Panc1 (cell line): ENCODE measurements at regions of chr1 and their contacts with region 1.

Region 1: DNA sequence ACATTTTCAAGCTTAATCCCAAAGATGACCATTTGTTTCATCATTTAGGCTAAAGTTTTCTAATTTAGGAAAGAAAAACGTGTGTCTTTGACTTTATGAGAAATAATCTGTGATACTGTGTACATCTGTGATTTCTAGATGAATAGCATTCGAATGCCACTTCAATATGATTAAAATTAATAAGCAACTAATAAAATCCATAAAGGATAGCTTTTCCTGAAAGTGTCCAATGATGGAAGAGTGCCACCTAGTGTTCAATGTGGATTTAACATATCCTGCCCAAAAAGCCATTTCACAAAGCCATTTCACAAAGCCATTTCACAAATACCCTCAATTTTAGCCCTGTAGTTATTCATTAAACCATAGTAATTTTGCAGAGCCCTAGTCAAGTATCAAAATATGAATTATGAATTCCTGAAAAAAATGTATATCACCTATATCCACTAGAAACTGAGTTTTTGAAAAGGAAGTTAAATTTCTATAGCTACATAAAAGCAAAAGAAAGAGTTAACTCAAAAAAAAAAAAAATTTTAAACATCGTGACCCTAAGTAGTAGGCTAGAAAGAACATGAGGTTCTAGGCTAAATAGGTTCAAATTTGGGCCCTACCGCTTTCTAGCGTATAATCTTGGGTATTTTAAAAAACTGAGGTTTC is 19.1 kb downstream of the NME7 start:
- DNase-seq: no peak
- ATAC-seq: no peak
- H3K4me3 ChIP-seq: no peak overlapping the region
- H3K27ac ChIP-seq: no peak overlapping the region
- H3K4me1 ChIP-seq: no peaks in the 10 kb centered on the region
- H3K27me3 ChIP-seq: no peaks in the 10 kb centered on the region
- CTCF ChIP-seq: peak; percentile 76; the same call in 1 of the 2 replicates

Region 2: DNA sequence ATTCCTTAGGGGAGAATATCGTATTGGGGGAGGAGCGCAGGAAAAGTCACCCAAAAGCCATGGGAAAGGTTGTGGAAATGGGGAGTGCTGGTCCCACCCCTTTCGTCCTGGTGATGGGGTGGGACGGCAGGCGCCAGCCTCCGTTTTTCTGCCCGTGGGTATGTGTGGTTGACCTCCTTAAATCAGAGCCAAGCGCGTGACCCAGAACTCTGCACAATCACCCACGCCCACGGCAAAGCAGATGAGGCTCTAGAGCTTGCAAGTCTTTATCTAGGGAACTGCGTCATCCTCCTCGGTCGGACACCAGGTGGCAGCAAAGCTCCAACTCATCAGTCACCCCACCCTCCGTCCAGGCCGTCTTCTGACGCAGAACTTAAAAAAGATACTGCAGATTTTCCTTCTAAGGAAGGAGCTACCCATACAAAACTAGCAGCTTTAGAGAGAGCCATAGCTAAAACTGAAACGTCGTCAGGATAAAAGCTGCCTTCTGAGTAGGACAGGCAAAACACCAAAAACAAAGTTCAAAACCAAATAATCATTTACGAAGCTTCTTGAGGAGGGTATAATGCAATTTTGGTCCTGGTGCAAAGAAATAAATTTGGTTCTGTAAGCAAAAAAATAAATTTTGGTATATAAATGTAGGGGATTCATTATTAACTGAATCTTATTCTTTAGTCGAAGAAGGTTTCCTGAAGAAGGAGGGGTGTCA is 1005.8 kb before region 1 on chr1:
- CTCF ChIA-PET with region 1: interaction called, 5 read pairs
- POLR2A ChIA-PET with region 1: no interaction called
- in situ Hi-C with region 1: no loop called
- intact Hi-C with region 1: loop called (anchors 5 kb)
- DNase-seq: peak; percentile 73
- ATAC-seq: peak; percentile 97
- H3K4me3 ChIP-seq: peak overlapping the region in 1 of 2 experiments; percentile 35; a peak in 2 of 4 replicates
- H3K27ac ChIP-seq: no peak overlapping the region
- H3K4me1 ChIP-seq: peaks cover 2% of the 10 kb centered on the region; the same call in 1 of the 2 replicates
- H3K27me3 ChIP-seq: peaks cover 3% of the 10 kb centered on the region; the same call in 1 of the 2 replicates
- CTCF ChIP-seq: peak; percentile 81

Region 3: GRCh38 chr1:168439456-168440375 is 908.8 kb before region 1 on chr1:
- CTCF ChIA-PET with region 1: interaction called, 5 read pairs
- POLR2A ChIA-PET with region 1: no interaction called
- in situ Hi-C with region 1: no loop called
- intact Hi-C with region 1: loop called (anchors 10 kb)
- DNase-seq: peak; percentile 36
- ATAC-seq: peak; percentile 91
- H3K4me3 ChIP-seq: peak overlapping the region in 1 of 2 experiments; percentile 31; a peak in 2 of 4 replicates
- H3K27ac ChIP-seq: no peak overlapping the region
- H3K4me1 ChIP-seq: no peaks in the 10 kb centered on the region
- H3K27me3 ChIP-seq: no peaks in the 10 kb centered on the region; the same call in 1 of the 2 replicates
- CTCF ChIP-seq: peak; percentile 84

Region 4: GRCh38 chr1:168603501-168604110 is 744.9 kb before region 1 on chr1:
- CTCF ChIA-PET with region 1: interaction called, 17 read pairs
- POLR2A ChIA-PET with region 1: no interaction called
- in situ Hi-C with region 1: no loop called
- intact Hi-C with region 1: loop called (anchors 1 kb)
- DNase-seq: peak; percentile 48
- ATAC-seq: peak; percentile 98
- H3K4me3 ChIP-seq: no peak overlapping the region
- H3K27ac ChIP-seq: no peak overlapping the region
- H3K4me1 ChIP-seq: no peaks in the 10 kb centered on the region
- H3K27me3 ChIP-seq: no peaks in the 10 kb centered on the region
- CTCF ChIP-seq: peak; percentile 86

Region 5: DNA sequence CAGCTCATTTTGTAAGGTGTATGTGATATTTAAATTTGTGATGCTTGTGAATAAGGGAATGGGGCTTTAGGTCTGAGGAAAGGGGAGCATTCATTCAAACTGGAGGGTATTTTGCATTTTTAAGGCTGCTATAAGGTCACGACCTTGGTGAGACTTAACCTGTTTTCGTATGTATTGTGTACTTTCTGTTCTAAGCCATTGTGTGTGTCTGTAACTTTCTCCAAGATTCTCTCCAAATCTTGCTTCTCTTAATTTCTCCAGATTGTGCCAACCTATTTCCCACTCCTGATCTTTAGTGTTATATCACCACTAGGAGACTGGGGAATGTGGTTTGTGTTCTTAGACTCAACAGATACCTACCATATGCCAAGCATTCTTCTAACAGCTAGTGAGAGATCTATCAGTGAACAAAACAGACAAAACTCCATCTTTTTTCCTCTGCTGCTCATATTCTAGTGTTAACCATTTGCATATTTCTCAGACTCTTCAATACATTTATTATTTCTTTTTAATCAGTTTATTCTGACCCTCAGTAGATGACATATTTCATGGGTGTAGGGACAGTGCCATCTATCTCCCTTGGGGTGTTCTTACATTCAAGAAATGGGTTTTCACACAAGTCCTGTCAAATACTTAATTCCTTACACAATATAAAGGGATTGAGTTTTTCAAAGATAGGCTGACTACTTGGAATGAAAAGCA is 214.6 kb before region 1 on chr1:
- CTCF ChIA-PET with region 1: no interaction called
- POLR2A ChIA-PET with region 1: interaction called, 3 read pairs
- in situ Hi-C with region 1: no loop called
- intact Hi-C with region 1: loop called (anchors 5 kb)
- DNase-seq: no peak
- ATAC-seq: no peak
- H3K4me3 ChIP-seq: no peak overlapping the region
- H3K27ac ChIP-seq: no peak overlapping the region
- H3K4me1 ChIP-seq: no peaks in the 10 kb centered on the region
- H3K27me3 ChIP-seq: no peaks in the 10 kb centered on the region
- CTCF ChIP-seq: peak; percentile 29; the same call in 1 of the 2 replicates

Region 6: GRCh38 chr1:169201084-169201619 is 147.4 kb before region 1 on chr1:
- CTCF ChIA-PET with region 1: no interaction called
- POLR2A ChIA-PET with region 1: no interaction called
- in situ Hi-C with region 1: no loop called
- intact Hi-C with region 1: no loop called
- DNase-seq: no peak
- ATAC-seq: no peak
- H3K4me3 ChIP-seq: no peak overlapping the region
- H3K27ac ChIP-seq: no peak overlapping the region
- H3K4me1 ChIP-seq: no peaks in the 10 kb centered on the region
- H3K27me3 ChIP-seq: no peaks in the 10 kb centered on the region
- CTCF ChIP-seq: no peak

Region 7: GRCh38 chr1:169307186-169307585 is 41.3 kb before region 1 on chr1:
- CTCF ChIA-PET with region 1: interaction called, 13 read pairs
- POLR2A ChIA-PET with region 1: no interaction called
- in situ Hi-C with region 1: no loop called
- intact Hi-C with region 1: no loop called
- DNase-seq: no peak
- ATAC-seq: no peak
- H3K4me3 ChIP-seq: no peak overlapping the region
- H3K27ac ChIP-seq: no peak overlapping the region
- H3K4me1 ChIP-seq: no peaks in the 10 kb centered on the region
- H3K27me3 ChIP-seq: no peaks in the 10 kb centered on the region
- CTCF ChIP-seq: no peak

Region 8: DNA sequence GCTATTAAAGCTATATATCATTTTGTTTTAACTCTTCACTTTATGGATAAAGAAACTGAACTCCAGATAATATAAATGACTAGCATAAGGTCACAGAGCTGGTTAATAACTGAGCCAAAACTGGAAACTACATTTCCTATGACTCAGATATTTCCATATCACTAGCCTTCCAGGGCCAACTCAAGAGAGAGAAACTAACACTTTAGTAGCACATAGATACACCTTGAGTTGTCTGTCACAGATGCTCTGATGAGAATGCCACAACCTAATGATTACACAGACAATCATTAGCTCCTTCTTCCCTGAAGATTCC is 21.6 kb before region 1 on chr1:
- CTCF ChIA-PET with region 1: no interaction called
- POLR2A ChIA-PET with region 1: no interaction called
- in situ Hi-C with region 1: no loop called
- intact Hi-C with region 1: no loop called
- DNase-seq: no peak
- ATAC-seq: peak; percentile 62; the same call in 1 of the 2 replicates
- H3K4me3 ChIP-seq: no peak overlapping the region
- H3K27ac ChIP-seq: no peak overlapping the region; the same call in 1 of the 2 replicates
- H3K4me1 ChIP-seq: peaks cover 2% of the 10 kb centered on the region; the same call in 1 of the 2 replicates
- H3K27me3 ChIP-seq: no peaks in the 10 kb centered on the region
- CTCF ChIP-seq: no peak